ENCODE measurements at regions of chr12 and their contacts with region 1.

Region 1: DNA sequence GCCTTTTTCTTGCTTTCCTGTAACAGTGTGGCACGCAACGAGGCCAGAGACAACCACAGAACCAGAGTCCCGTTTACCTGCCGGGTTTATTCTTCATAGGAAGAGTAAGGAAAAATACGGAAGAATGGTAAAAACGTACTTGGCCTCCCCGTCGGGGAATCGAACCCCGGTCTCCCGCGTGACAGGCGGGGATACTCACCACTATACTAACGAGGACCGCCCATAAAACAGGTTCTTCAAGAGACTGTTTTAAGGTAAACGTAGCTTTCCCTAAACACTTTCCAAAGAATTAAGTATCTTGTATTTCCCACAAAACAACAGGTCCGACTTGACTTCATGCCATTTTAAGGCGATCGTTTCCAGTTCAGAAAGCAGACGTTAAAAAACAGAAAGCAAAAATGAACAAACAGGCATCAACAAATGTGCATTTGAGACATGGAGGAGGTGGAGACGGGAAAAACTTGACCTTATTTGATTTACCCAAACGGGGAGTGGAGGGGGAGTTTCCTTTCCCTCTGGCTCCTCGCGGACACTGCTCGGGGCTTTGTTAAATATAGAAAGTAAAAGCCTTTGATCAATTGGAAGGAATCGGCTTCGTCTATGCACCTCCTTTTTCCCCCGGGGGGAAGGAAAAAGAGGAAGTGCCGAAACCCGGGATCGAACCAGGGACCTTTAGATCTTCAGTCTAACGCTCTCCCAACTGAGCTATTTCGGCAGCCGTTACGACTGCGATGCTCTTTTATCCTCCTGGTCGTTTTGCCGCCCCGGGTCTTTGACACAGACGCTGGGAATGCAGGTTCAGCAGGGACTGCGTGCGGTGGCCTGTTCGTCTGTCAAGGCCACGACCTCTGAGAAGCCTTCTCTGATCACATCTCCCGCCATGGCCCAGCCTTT is 13.0 kb upstream of the UBC start:
- DNase-seq: peak; percentile 81 to 93
- H3K4me3 ChIP-seq: peak overlapping the region; percentile 76
- H3K27ac ChIP-seq: peak overlapping the region; percentile 98
- H3K4me1 ChIP-seq: peaks cover 36% of the 10 kb centered on the region
- H3K27me3 ChIP-seq: no peaks in the 10 kb centered on the region
- CTCF ChIP-seq: no peak

Region 2: DNA sequence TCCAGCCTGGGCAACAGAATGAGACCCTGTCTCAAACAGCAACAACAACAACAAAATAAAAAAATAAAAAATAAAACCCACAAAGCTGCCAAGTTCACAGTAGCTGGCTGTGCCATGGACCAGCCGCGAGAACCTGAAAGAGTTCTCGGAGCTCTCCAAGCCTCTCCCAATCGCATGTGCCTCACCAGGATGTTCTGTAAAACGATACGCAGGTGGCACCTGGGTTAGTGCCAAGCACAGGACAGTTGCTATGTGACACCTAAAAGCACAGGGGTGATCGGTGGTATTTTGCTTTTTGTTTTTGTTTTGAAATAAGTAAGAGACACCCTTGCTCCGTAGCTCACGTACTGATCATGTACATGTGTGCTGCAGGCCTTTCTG is 580.1 kb before region 1 on chr12:
- CTCF ChIA-PET with region 1: interaction called, 12 read pairs
- POLR2A ChIA-PET with region 1: no interaction called
- intact Hi-C with region 1: no loop called
- DNase-seq: no peak
- H3K4me3 ChIP-seq: no peak overlapping the region
- H3K27ac ChIP-seq: no peak overlapping the region
- H3K4me1 ChIP-seq: no peaks in the 10 kb centered on the region
- H3K27me3 ChIP-seq: no peaks in the 10 kb centered on the region
- CTCF ChIP-seq: no peak

Region 3: DNA sequence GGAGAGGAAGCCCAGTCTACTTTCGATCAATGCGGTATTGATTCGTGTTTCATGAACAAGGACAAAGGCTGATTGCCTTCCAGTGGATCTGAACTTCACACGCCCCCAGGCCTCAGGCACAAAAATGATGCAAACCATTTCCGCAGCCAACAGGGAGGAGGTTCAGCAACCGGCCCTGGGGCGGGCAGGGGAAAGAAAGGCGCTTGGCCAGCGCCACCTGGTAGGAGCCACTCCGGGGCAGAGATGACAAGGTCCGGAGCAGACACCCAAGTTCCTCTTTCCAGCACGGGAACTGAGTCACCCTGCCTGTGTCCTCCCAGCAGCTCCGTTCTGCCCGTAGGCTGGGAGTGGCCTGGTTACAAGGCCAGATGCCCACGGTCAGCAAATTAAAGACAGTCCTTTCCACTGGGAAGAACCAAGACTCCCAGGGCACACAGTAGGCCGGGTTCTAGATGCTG is 200.2 kb before region 1 on chr12:
- CTCF ChIA-PET with region 1: no interaction called
- POLR2A ChIA-PET with region 1: no interaction called
- intact Hi-C with region 1: no loop called
- DNase-seq: peak; percentile 86 to 97
- H3K4me3 ChIP-seq: no peak overlapping the region
- H3K27ac ChIP-seq: peak overlapping the region; percentile 91
- H3K4me1 ChIP-seq: peaks cover 45% of the 10 kb centered on the region
- H3K27me3 ChIP-seq: no peaks in the 10 kb centered on the region
- CTCF ChIP-seq: no peak

Region 4: GRCh38 chr12:124829008-124829707 is 98.3 kb before region 1 on chr12:
- CTCF ChIA-PET with region 1: no interaction called
- POLR2A ChIA-PET with region 1: no interaction called
- intact Hi-C with region 1: no loop called
- DNase-seq: peak; percentile 66 to 91
- H3K4me3 ChIP-seq: no peak overlapping the region
- H3K27ac ChIP-seq: peak overlapping the region; percentile 80
- H3K4me1 ChIP-seq: peaks cover 27% of the 10 kb centered on the region
- H3K27me3 ChIP-seq: no peaks in the 10 kb centered on the region
- CTCF ChIP-seq: no peak

Region 5: GRCh38 chr12:124917135-124917840 is 10.2 kb before region 1 on chr12:
- CTCF ChIA-PET with region 1: interaction called, 4 read pairs
- POLR2A ChIA-PET with region 1: interaction called, 30 read pairs
- intact Hi-C with region 1: loop called (anchors 1 kb)
- DNase-seq: peak; percentile 95 to 99
- H3K4me3 ChIP-seq: peak overlapping the region; percentile 100
- H3K27ac ChIP-seq: peak overlapping the region; percentile 100
- H3K4me1 ChIP-seq: peaks cover 54% of the 10 kb centered on the region
- H3K27me3 ChIP-seq: no peaks in the 10 kb centered on the region
- CTCF ChIP-seq: 0 out of 2 replicates have a peak, but pooled peaks have one; percentile 5

Region 6: DNA sequence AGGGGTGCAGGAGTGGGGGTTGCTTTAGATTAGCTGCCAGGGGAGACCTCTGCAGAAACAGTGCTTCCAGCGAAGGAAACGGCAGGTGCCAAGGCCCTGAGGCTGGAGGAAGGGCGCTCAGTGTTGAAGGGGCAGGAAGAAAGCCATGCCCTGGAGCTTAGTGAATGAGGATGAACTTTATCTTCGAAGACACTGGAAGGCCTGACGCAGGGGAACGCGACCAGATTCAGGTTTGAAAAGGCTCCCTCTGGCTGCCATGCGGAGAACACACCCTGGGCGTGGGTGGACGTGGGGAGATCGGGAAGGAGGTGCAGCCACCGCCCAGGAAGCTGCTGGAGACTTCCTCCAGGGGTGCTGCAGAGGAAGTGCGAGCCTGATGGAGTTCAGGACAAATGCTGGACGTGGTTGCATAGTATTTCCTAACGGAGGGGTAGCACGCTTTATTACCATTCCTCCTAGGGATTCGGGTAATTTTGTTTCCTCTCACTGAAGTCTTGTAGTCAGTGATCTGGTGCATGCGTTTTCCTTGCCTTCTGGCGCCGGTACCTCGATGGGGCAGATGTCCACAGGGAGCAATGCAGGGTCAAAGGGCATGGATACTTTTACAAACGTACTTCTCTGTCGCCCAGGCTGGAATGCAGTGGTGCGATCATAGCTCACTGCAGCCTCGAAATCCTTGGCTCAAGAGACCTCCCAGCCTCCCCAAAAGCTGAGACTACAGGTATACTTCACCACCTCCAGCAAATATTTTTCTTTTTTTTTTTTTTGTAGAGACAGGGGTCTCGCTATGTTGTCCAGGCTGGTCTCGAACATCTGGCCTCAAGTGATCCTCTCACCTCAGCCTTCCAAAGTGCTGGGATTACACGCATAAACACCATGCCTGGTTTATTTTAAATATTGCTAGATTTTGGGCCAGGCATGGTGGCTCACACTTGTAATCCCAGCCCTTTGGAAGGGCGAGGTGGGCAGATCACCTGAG is 13.4 kb after region 1 on chr12:
- CTCF ChIA-PET with region 1: interaction called, 3 read pairs
- POLR2A ChIA-PET with region 1: interaction called, 11 read pairs
- intact Hi-C with region 1: loop called (anchors 1 kb)
- DNase-seq: peak; percentile 86 to 88
- H3K4me3 ChIP-seq: peak overlapping the region; percentile 67; the same call in 1 of the 2 replicates
- H3K27ac ChIP-seq: peak overlapping the region; percentile 86
- H3K4me1 ChIP-seq: peaks cover 23% of the 10 kb centered on the region
- H3K27me3 ChIP-seq: no peaks in the 10 kb centered on the region
- CTCF ChIP-seq: peak; percentile 76

Region 7: DNA sequence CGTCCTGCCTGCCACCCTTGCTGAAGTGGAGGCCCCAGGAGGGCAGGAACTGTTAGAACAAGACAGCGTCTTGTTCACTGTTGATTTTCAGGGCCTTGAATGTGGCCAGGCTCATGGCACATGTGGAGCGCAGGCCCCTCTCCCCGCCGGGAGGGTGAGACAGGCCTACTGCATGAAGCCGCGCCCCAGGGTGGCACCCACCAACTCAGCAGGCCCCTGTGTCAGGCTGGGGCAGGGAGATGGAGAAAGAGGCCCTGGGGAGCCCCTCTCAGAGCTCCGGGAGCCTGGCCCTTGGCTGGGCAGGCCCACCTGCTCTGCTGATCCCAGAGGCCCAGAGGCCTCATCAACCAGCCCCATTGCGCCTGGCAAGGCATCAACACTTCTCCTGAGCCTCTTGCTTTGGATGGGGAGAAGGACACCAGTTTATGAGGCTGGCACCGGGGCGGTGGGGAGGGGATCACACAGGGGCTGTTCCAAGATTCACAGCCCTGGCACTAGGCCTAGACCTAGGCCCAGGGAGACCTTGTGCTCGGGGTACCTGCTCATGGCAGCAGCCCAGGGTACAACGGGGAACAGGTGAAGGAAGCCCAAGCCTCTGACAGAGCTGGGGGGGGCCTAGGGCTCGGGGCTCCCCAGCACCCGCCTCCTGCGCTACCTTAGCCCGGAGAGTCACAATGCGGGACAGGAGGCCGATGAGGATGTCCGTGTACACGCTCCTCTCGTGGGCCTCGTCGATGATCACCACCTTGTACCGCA is 43.4 kb after region 1 on chr12:
- CTCF ChIA-PET with region 1: no interaction called
- POLR2A ChIA-PET with region 1: no interaction called
- intact Hi-C with region 1: no loop called
- DNase-seq: no peak
- H3K4me3 ChIP-seq: no peak overlapping the region
- H3K27ac ChIP-seq: no peak overlapping the region
- H3K4me1 ChIP-seq: no peaks in the 10 kb centered on the region
- H3K27me3 ChIP-seq: no peaks in the 10 kb centered on the region
- CTCF ChIP-seq: no peak

Measured in PC-9 (cell line).